Activated CD4-positive, alpha-beta T cell treated with anti-CD3 and anti-CD28 coated beads, Interleukin-2, amount 10 ng/mL, durations not matched to agents 7 days and 5 days (primary cell): ENCODE measurements at regions of chr16 and their contacts with region 1.

Region 1: DNA sequence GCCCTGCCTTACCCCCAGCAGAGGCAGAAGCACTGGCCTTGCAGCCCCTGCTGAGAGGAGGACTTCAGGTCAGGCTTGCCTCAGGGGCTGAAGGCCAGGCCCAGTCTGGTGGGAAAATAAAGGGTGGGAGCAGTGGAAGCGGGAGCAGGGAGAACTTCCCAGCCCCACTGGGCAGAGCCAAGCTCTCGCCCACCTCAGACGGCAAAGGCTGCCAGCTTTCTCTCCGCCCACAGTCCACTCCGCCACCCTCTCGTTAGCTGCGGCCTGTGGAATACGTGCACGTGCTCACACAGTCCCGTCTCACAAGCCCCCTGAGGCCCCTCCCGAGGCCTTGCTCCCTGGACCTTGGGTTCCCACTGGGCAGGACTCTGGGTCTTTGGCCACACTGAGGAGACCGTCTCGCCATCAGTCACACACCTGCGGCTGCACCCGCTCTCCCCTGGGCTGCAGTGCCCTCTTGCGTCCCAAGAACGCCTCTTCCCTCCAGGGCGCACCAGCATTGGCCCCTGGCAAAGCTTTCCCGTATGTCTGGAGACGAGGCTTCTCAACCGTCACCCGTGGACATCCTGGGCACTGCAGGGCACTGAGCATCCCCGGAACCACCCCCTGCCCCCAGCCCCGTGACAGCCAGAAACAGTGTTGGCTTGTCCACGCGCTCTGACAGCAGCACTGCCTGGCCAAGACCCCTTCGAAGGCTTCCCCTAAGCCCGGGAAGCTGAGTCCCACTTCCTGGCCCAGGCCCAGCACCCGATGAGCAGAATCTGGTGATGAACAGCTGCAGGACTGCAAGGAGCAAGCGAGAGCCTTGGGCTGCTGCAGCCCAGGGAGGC is 8.3 kb downstream of the MRPL28 start:
- DNase-seq: peak; percentile 76
- H3K4me3 Mint-ChIP-seq: no peak overlapping the region
- H3K27ac Mint-ChIP-seq: peak overlapping the region; percentile 31
- H3K4me1 Mint-ChIP-seq: peaks cover 6% of the 10 kb centered on the region
- H3K27me3 Mint-ChIP-seq: no peaks in the 10 kb centered on the region

Region 2: GRCh38 chr16:106623-107324 is 255.3 kb before region 1 on chr16:
- CTCF ChIA-PET with region 1: interaction called, 12 read pairs
- POLR2A ChIA-PET with region 1: no interaction called
- DNase-seq: peak; percentile 69
- H3K4me3 Mint-ChIP-seq: no peak overlapping the region
- H3K27ac Mint-ChIP-seq: no peak overlapping the region
- H3K4me1 Mint-ChIP-seq: peaks cover 2% of the 10 kb centered on the region
- H3K27me3 Mint-ChIP-seq: no peaks in the 10 kb centered on the region

Region 3: GRCh38 chr16:117379-118365 is 244.4 kb before region 1 on chr16:
- CTCF ChIA-PET with region 1: interaction called, 10 read pairs
- POLR2A ChIA-PET with region 1: no interaction called
- DNase-seq: peak; percentile 74
- H3K4me3 Mint-ChIP-seq: no peak overlapping the region
- H3K27ac Mint-ChIP-seq: no peak overlapping the region
- H3K4me1 Mint-ChIP-seq: peaks cover 6% of the 10 kb centered on the region
- H3K27me3 Mint-ChIP-seq: no peaks in the 10 kb centered on the region

Region 4: GRCh38 chr16:386641-387156 is 24.6 kb after region 1 on chr16:
- CTCF ChIA-PET with region 1: no interaction called
- POLR2A ChIA-PET with region 1: no interaction called
- DNase-seq: no peak
- H3K4me3 Mint-ChIP-seq: no peak overlapping the region
- H3K27ac Mint-ChIP-seq: no peak overlapping the region
- H3K4me1 Mint-ChIP-seq: peaks cover 17% of the 10 kb centered on the region
- H3K27me3 Mint-ChIP-seq: peaks cover 4% of the 10 kb centered on the region